PC-3 (cell line): ENCODE measurements at regions of chr1 and their contacts with region 1.

Region 1: GRCh38 chr1:208245185-208245705 is 1.1 kb upstream of the PLXNA2 start:
- DNase-seq: peak; percentile 97
- ATAC-seq: peak; percentile 53
- H3K4me3 ChIP-seq: peak overlapping the region; percentile 93
- H3K27ac ChIP-seq: no peak overlapping the region
- H3K4me1 ChIP-seq: peaks cover 22% of the 10 kb centered on the region
- H3K27me3 ChIP-seq: no peaks in the 10 kb centered on the region
- CTCF ChIP-seq: peak; percentile 95

Region 2: DNA sequence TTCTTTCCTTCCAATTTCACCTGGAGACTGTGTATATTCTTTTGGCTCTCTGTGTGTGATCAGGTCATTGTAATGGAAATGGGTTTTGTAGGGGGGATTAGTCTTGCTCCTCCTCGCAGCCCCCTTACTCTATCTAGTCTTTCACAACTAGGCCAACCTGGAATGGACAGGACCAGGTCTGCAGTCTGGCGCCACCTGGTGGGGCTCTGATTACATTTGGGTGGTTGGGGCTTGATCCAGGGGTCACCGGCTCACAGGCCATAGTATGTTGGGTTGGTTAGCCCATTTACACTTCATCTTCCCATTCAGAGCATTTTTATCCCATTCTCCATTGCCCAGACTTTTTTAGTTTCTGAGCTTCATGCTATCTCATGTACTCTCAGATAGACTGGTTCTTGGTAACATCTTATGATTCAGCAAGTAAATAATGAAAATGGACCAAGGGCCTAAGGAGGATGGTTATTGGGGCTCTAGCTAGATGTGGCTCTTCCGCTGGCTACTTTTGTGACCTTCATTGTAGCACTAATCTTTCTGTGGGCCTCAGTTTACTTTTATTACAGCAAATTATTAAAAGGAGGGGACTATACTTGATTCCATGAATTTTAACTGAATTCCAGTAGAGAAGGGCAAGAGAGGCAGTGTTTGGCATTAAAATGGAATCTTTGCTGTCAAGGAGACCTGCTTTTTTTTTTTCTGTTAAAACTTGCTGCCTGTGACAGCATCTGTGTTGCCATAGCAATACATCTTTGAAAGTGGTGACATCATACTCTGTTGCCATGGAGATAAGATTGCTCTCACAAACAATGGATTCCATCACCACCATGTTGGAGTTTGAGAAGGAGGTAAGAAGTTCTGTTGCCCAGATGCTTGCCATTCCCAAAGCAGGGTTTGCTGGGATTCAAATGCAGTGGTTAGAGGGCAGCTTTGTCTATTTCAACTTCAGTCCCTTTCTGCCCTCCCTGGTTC is 151.2 kb before region 1 on chr1:
- CTCF ChIA-PET with region 1: no interaction called
- POLR2A ChIA-PET with region 1: interaction called, 9 read pairs
- intact Hi-C with region 1: loop called (anchors 1 kb)
- DNase-seq: peak; percentile 72
- ATAC-seq: peak; percentile 88
- H3K4me3 ChIP-seq: no peak overlapping the region
- H3K27ac ChIP-seq: no peak overlapping the region
- H3K4me1 ChIP-seq: no peaks in the 10 kb centered on the region
- H3K27me3 ChIP-seq: no peaks in the 10 kb centered on the region
- CTCF ChIP-seq: peak; percentile 97

Region 3: DNA sequence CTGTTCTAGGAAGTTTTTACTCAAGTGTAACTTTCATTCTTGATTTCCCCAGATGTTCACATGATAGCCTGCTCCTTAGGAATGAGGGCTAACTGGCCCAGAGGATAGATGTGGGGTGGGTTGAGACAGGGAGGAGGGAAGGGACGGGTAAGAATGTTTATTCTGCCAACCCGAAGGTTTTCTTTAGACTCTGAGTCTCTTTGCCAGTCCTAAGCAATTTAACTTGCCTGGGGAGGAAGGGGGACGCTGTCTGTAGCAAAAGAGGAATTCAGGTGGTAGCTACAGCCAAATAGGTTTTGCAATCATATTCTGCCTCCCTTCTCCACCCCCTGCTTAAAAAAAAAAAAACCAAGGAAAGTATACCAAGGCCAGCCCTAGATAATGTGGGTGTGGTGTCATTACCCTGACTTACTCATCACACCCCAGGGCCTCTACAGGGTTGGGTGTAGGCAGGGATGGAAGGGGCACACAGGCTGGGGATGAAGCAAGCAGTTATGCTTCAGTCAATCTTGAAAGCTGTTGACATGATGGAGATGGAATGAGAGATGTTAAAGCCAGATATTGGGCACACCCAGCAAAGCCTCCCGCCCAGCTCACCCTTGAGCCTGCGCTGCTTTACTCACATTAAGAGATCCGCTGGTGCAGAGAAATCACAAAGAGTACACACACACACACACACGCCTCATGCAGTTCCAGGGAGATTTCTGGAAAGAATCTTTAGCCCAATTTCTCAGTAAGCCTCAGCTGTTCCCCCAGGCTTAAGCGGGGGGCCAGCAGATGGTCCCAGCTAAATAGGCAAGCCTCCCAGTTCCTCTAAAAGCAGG is 60.9 kb before region 1 on chr1:
- CTCF ChIA-PET with region 1: interaction called, 13 read pairs
- POLR2A ChIA-PET with region 1: interaction called, 17 read pairs
- intact Hi-C with region 1: loop called (anchors 1 kb)
- DNase-seq: peak; percentile 99
- ATAC-seq: peak; percentile 92
- H3K4me3 ChIP-seq: peak overlapping the region; percentile 29; the same call in 1 of the 2 replicates
- H3K27ac ChIP-seq: peak overlapping the region; percentile 91
- H3K4me1 ChIP-seq: peaks cover 82% of the 10 kb centered on the region
- H3K27me3 ChIP-seq: no peaks in the 10 kb centered on the region
- CTCF ChIP-seq: no peak

Region 4: GRCh38 chr1:208265122-208265469 is 19.9 kb after region 1 on chr1:
- CTCF ChIA-PET with region 1: interaction called, 4 read pairs
- POLR2A ChIA-PET with region 1: interaction called, 11 read pairs
- intact Hi-C with region 1: no loop called
- DNase-seq: no peak
- ATAC-seq: no peak
- H3K4me3 ChIP-seq: no peak overlapping the region
- H3K27ac ChIP-seq: no peak overlapping the region
- H3K4me1 ChIP-seq: no peaks in the 10 kb centered on the region
- H3K27me3 ChIP-seq: peaks cover 61% of the 10 kb centered on the region
- CTCF ChIP-seq: no peak